ENCODE measurements at regions of chr20 and their contacts with region 1.

Region 1: GRCh38 chr20:10783707-10784578 is 110.1 kb upstream of the JAG1 start:
- DNase-seq: no peak
- H3K4me3 ChIP-seq: no peak overlapping the region
- H3K27ac ChIP-seq: peak overlapping the region; percentile 18
- H3K4me1 ChIP-seq: peaks cover 9% of the 10 kb centered on the region
- H3K27me3 ChIP-seq: no peaks in the 10 kb centered on the region
- CTCF ChIP-seq: no peak

Region 2: DNA sequence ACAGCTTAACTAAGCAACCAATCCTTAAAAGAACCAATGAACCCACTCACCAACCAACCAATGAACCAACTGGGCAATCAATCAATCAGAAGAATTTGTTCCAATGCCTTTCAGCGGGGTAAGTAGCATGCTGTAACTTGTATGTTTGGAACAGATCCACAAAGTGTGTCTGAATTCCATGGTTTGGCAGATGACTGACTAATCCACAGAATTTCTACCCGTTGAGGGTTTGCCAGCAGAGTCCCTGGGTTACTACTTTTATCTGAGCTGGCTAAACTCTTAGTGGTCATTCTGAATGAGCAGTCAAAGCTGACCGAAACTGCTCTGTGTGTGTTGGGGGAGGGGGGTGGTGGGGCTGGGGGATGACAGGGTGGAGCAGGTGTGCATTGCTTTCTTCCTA is 14.9 kb after region 1 on chr20:
- CTCF ChIA-PET with region 1: no interaction called
- dilution Hi-C with region 1: no loop called
- in situ Hi-C with region 1: no loop called
- intact Hi-C with region 1: loop called (anchors 2 kb)
- DNase-seq: peak; percentile 90
- H3K4me3 ChIP-seq: no peak overlapping the region
- H3K27ac ChIP-seq: peak overlapping the region; percentile 42
- H3K4me1 ChIP-seq: peaks cover 15% of the 10 kb centered on the region
- H3K27me3 ChIP-seq: no peaks in the 10 kb centered on the region
- CTCF ChIP-seq: no peak

Region 3: GRCh38 chr20:11057624-11058023 is 273.7 kb after region 1 on chr20:
- CTCF ChIA-PET with region 1: no interaction called
- dilution Hi-C with region 1: no loop called
- in situ Hi-C with region 1: no loop called
- intact Hi-C with region 1: no loop called
- DNase-seq: no peak
- H3K4me3 ChIP-seq: no peak overlapping the region
- H3K27ac ChIP-seq: no peak overlapping the region
- H3K4me1 ChIP-seq: no peaks in the 10 kb centered on the region
- H3K27me3 ChIP-seq: no peaks in the 10 kb centered on the region
- CTCF ChIP-seq: no peak

Measured in mammary epithelial cell (primary cell).